Ovary (tissue), 10 donors: ENCODE measurements at regions of chr16 and their contacts with region 1.

Region 1: GRCh38 chr16:12095275-12096156 is 119.0 kb downstream of the SNX29 start:
- DNase-seq: peak; percentile 69 to 87 (median 83)
- H3K4me3 ChIP-seq: no peak overlapping the region
- H3K27ac ChIP-seq: peak overlapping the region in 1 of 2 donors; percentile 56
- H3K4me1 ChIP-seq: peaks cover 25% of the 10 kb centered on the region
- H3K27me3 ChIP-seq: no peaks in the 10 kb centered on the region
- CTCF ChIP-seq: peak; percentile 80 to 83 (median 81)
- EP300 ChIP-seq: no peak
- POLR2A ChIP-seq: no peak

Region 2: DNA sequence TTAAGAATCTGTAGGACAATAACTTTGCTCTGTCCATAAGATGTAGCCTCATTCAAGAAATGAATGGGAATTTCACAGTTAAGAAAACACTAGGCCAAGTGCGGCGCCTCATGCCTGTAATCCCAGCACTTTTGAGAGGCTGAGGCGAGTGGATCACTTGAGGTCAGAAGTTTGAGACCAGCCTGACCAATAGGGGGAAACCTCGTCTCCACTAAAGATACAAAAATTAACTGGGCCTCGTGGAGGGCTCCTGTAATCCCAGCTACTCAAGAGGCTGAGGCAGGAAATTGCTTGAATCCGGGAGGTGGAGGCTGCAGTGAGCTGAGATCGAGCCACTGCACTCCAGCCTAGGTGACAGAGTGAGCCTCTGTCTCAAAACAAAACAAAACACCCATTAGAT is 224.3 kb before region 1 on chr16:
- intact Hi-C with region 1: no loop called
- DNase-seq: no peak
- H3K4me3 ChIP-seq: no peak overlapping the region
- H3K27ac ChIP-seq: no peak overlapping the region
- H3K4me1 ChIP-seq: no peaks in the 10 kb centered on the region
- H3K27me3 ChIP-seq: no peaks in the 10 kb centered on the region
- CTCF ChIP-seq: no peak
- EP300 ChIP-seq: no peak
- POLR2A ChIP-seq: no peak

Region 3: DNA sequence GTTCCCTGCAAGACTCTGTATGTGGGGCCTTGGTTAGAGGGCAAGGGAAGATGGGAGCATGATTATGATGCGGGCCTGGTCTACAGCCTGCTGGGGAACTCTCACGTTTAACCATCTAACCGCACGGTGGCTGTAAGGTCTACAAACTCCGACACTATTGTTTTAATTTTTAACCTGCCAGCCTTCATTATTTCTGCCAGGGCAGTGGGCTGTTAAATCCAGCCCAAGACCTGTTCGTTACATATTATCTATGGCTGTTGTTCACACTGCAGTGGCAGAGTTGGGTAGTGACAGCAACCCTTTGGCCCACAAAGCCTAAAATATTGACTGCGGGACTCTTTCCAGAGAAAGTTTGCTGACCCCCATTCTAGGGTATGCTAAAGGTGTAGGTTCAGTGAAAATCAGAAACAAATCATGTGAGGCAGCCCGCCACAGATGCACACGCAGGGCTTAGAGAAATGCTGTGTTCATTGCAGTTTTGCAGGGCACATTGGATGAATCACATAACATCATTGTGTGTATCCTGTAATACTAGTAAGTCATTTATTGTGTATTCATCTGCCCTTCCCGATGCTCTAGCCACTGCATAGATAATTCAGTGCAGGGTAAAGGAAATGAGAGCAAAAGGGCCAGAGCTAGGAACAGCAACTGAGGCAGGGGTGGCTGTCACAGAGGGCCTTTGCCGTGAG is 104.7 kb before region 1 on chr16:
- intact Hi-C with region 1: no loop called
- DNase-seq: no peak
- H3K4me3 ChIP-seq: no peak overlapping the region
- H3K27ac ChIP-seq: no peak overlapping the region
- H3K4me1 ChIP-seq: no peaks in the 10 kb centered on the region
- H3K27me3 ChIP-seq: no peaks in the 10 kb centered on the region
- CTCF ChIP-seq: no peak
- EP300 ChIP-seq: no peak
- POLR2A ChIP-seq: no peak

Region 4: DNA sequence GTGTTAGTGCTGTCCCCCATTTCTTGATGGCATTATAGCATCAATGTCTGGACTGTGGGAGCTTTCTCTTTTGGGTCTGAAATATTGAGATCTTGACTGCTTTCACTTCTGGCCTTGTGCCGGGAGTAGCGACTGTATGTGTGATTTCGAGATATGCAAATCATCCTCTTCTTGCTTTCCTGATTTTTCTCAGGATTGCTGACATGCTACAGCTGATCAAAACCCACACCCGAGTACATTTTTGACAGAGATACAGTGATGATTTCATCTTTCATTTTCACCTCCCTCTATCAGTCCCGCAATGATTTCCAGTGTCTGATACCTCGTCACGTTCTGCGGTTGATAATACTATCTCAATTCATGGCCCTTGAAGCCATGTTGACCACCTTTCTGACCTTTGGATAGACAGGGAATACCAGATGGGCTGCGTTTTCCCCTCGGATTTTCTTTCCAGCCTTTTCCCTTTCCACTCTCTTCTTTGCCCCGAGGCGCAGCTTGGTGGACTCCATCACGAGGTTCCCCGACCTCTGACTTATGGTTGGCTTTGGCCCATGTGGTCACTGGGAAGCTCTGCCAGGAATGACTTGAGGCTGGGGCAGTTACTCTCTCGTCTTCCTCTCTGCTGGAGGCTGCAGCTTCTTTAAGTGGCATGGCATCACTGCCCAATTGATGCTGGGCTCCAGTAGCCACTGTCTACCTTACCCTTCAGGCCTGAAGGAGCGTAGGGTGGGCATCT is 65.5 kb after region 1 on chr16:
- intact Hi-C with region 1: loop called in 1 of 4 experiments (anchors 10 kb)
- DNase-seq: peak in 1 of 5 donors; percentile 33
- H3K4me3 ChIP-seq: no peak overlapping the region
- H3K27ac ChIP-seq: no peak overlapping the region
- H3K4me1 ChIP-seq: peaks cover 31% of the 10 kb centered on the region
- H3K27me3 ChIP-seq: no peaks in the 10 kb centered on the region
- CTCF ChIP-seq: no peak
- EP300 ChIP-seq: no peak
- POLR2A ChIP-seq: no peak

Region 5: GRCh38 chr16:12257926-12258561 is 162.5 kb after region 1 on chr16:
- intact Hi-C with region 1: loop called in 1 of 4 experiments (anchors 10 kb)
- DNase-seq: no peak
- H3K4me3 ChIP-seq: no peak overlapping the region
- H3K27ac ChIP-seq: no peak overlapping the region
- H3K4me1 ChIP-seq: peaks cover 16% of the 10 kb centered on the region
- H3K27me3 ChIP-seq: no peaks in the 10 kb centered on the region
- CTCF ChIP-seq: no peak
- EP300 ChIP-seq: no peak
- POLR2A ChIP-seq: no peak

Region 6: GRCh38 chr16:12406926-12407690 is 311.6 kb after region 1 on chr16:
- intact Hi-C with region 1: loop called in 1 of 4 experiments (anchors 10 kb)
- DNase-seq: no peak
- H3K4me3 ChIP-seq: no peak overlapping the region
- H3K27ac ChIP-seq: no peak overlapping the region
- H3K4me1 ChIP-seq: peaks cover 4% of the 10 kb centered on the region
- H3K27me3 ChIP-seq: no peaks in the 10 kb centered on the region
- CTCF ChIP-seq: no peak
- EP300 ChIP-seq: no peak
- POLR2A ChIP-seq: no peak

Region 7: DNA sequence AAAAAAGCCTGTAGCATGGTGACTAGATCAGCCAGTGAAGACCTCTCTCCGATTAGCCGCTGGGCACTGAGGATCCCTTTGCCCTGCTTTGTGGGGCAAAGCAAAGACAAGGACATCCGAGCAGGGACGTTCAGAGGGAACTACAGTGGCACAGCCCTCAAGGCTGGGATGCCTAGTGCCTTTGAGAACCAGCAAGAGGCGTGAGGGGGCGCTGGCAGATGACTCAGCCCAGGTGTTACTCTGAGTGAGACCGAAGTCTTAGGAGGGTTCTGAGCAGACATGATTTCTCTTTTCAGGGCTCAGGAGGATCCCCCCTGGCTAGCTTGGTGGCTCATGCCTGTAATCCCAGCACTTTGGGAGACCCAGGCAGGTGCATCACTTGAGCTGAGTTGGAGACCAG is 529.6 kb after region 1 on chr16:
- intact Hi-C with region 1: loop called in 2 of 4 experiments (anchors 10 kb)
- DNase-seq: no peak
- H3K4me3 ChIP-seq: no peak overlapping the region
- H3K27ac ChIP-seq: no peak overlapping the region
- H3K4me1 ChIP-seq: no peaks in the 10 kb centered on the region
- H3K27me3 ChIP-seq: no peaks in the 10 kb centered on the region
- CTCF ChIP-seq: no peak
- EP300 ChIP-seq: no peak
- POLR2A ChIP-seq: no peak

Region 8: DNA sequence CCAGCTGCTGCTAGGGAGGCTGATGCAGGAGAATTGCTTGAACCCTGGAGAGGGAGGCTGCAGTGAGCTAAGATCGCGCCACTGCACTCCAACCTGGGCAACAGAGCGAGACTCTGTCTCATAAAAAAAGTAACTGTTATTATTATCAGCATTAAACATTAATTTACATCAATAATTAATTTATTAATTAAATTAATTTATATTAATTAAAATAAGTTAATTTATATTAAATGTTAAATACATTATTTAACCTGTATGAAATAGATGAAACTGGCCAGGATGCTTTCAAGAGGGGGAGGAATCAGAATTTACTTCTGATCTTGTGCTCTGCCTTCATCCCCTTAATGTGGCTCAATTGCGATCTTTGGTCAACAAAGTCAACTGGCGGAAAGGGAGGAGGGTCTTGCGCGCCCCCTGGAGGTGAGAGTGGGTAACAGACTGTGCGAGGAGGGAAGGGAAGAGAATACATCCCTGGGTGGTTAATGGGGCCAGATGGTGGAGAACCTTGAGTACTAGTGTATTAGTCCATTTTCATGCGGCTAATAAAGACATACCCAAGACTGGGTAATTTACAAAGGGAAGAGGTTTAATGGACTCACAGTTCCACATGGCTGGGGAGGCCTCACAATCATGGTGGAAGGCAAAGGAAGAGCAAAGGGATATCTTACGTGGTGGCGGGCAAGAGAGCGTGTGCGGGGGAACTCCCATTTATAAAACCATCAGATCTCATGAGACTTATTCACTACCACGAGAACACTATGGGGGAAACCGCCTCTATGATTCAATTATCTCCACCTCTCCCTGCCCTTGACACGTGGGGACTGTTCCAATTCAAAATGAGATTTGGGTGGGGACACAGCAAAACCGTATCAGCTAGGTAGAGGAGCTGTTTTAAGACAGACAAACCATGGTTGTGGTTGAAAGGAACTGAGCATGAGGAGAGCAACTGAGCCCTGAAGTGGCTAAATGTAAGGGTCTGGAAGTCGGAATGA is 723.9 kb after region 1 on chr16:
- intact Hi-C with region 1: loop called in 1 of 4 experiments (anchors 10 kb)
- DNase-seq: peak in 4 of 5 donors; percentile 35 to 62 (median 48)
- H3K4me3 ChIP-seq: no peak overlapping the region
- H3K27ac ChIP-seq: no peak overlapping the region
- H3K4me1 ChIP-seq: no peaks in the 10 kb centered on the region
- H3K27me3 ChIP-seq: no peaks in the 10 kb centered on the region
- CTCF ChIP-seq: peak in 1 of 3 donors; percentile 31
- EP300 ChIP-seq: no peak
- POLR2A ChIP-seq: no peak